BJ (cell line): ENCODE measurements at regions of chr11 and their contacts with region 1.

Region 1: DNA sequence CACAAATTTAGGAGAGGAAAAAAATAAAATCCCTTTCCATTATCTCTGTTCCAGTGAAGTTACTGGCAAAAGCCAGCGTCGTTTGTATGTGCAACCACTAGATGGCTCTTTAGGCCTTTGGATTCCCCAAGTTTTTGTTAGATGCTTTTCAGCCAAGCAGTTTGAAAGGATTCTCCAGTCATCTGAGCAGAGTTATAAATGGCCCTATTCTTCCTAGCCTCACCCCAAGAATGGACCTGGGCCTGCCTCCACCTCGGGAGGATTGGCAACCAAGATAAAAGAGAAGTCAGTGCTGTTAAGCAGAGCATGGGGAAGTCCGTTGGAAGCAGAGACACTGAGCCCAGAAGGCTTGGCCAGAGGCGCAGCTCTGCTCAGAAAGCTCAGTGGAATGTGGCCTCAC is 15.4 kb downstream of the FAM181B start:
- DNase-seq: peak; percentile 6
- H3K4me3 ChIP-seq: no peak overlapping the region
- H3K27me3 ChIP-seq: peaks cover 7% of the 10 kb centered on the region
- CTCF ChIP-seq: peak; percentile 85

Region 2: GRCh38 chr11:82523141-82523540 is 195.2 kb before region 1 on chr11:
- CTCF ChIA-PET with region 1: no interaction called
- POLR2A ChIA-PET with region 1: no interaction called
- DNase-seq: no peak
- H3K4me3 ChIP-seq: no peak overlapping the region
- H3K27me3 ChIP-seq: no peaks in the 10 kb centered on the region
- CTCF ChIP-seq: no peak

Region 3: DNA sequence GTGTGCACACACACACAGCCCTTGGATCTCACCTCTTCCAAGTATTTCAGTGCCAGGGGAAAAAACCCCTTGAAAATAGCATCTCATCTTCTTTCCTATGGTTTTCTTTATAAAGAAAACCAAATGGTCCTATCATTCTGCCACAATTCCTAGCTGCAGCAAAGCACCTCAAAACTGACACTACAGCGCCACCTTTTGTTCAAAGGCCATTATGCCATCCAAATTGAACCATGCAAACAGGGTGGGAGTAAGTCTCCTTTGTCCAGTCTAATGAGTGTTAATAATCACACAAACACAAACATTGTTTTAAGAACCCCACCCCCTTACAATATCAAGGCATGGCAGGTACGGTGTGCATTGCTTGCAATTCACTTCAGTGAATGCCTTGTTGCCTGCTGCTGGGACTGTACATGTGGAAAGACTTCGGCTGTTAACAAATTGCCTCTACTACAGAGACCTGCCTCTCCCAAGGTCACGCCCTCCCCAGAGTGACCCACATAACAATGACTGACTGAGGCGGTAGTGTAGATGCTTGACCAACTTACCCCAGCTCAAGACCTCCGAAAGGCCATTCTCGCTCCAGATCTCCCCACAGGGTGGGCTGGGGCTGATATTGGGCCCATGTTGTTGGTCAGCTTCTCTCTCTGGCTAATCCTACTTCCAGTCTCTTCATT is 16.3 kb before region 1 on chr11:
- CTCF ChIA-PET with region 1: interaction called, 20 read pairs
- POLR2A ChIA-PET with region 1: no interaction called
- DNase-seq: no peak
- H3K4me3 ChIP-seq: no peak overlapping the region
- H3K27me3 ChIP-seq: no peaks in the 10 kb centered on the region
- CTCF ChIP-seq: peak; percentile 65

Region 4: GRCh38 chr11:82732734-82733443 is 14.6 kb after region 1 on chr11:
- CTCF ChIA-PET with region 1: interaction called, 10 read pairs
- POLR2A ChIA-PET with region 1: no interaction called
- DNase-seq: no peak
- H3K4me3 ChIP-seq: peak overlapping the region; percentile 17; the same call in 1 of the 2 replicates
- H3K27me3 ChIP-seq: peaks cover 31% of the 10 kb centered on the region
- CTCF ChIP-seq: no peak

Region 5: GRCh38 chr11:83819933-83820549 is 1101.7 kb after region 1 on chr11:
- CTCF ChIA-PET with region 1: interaction called, 15 read pairs
- POLR2A ChIA-PET with region 1: no interaction called
- DNase-seq: peak; percentile 18
- H3K4me3 ChIP-seq: no peak overlapping the region
- H3K27me3 ChIP-seq: no peaks in the 10 kb centered on the region
- CTCF ChIP-seq: peak; percentile 59